CD14-positive monocyte (primary cell): ENCODE measurements at regions of chr4 and their contacts with region 1.

Region 1: DNA sequence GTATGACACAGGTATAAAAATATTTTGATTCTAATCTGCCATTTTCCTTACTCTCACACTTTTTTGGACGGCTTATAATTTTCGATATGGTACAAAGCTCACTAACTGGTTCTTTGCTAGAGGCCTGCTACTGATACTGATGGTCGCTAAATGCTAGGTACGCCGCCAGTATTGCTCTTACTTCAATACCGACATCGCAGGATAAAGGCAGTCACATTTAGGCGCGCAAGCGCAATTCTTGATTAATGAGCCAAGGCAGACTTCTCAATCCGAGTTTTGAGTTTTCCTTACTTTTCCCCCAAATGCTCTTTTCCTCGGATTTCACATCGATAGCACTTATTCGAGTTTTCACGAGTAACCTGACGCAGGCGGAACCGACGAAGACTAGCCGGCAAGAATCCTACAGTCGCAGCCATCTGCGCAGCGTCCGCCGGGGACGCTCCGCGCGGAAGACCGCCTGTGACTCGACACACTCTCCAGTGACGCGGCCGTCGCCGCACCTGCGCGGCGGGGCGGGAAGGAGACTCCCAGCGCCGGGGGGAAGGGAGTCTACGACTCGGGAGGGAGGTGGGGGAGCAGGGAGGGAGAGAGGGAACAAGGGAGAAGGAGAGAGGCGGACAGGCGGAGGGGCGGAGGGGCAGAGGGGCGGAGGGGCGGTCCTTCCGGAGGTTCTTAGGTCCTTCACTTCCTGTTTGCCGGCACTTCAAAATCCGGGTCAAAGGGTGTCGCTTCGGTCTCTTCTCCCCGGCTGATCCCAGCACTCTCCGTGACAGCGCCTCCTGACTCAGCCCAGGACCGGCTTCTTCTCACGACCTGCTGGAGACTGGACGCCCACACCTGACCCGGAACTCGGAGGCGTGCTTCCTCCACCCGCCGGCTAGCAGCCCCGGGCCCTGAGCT is at the start of gene USP38:
- DNase-seq: peak; percentile 93 to 98 (median 93)
- H3K4me3 ChIP-seq: peak within 1 kb of the TSS; percentile 75 to 89 (median 85)
- H3K4me3 Mint-ChIP-seq: peak within 1 kb of the TSS; percentile 98 to 99
- H3K27ac ChIP-seq: peak within 1 kb of the TSS; percentile 80 to 96
- H3K27ac Mint-ChIP-seq: peak within 1 kb of the TSS; percentile 93 to 99 (median 95)
- H3K4me1 ChIP-seq: peaks cover 37 to 54% of the 10 kb centered on the region in 2 donors
- H3K4me1 Mint-ChIP-seq: peaks cover 42% of the 10 kb centered on the region
- H3K27me3 ChIP-seq: no peaks in the 10 kb centered on the region
- H3K27me3 Mint-ChIP-seq: peaks cover 0 to 2% (median 0%) of the 10 kb centered on the region in 3 donors
- CTCF ChIP-seq: no peak
- polyA plus RNA-seq, gene USP38: 7.3 to 19.3 (median 12.4) TPM

Region 2: GRCh38 chr4:141220655-141221605 is 1963.5 kb before region 1 on chr4 and contains the start of gene ZNF330:
- intact Hi-C with region 1: loop called (anchors 5 to 10 kb)
- DNase-seq: peak; percentile 81 to 89 (median 85)
- H3K4me3 ChIP-seq: peak within 1 kb of the TSS; percentile 78 to 92 (median 87)
- H3K4me3 Mint-ChIP-seq: peak within 1 kb of the TSS; percentile 85 to 91
- H3K27ac ChIP-seq: peak within 1 kb of the TSS; percentile 94 to 99
- H3K27ac Mint-ChIP-seq: peak within 1 kb of the TSS; percentile 91 to 98 (median 96)
- H3K4me1 ChIP-seq: peaks cover 12 to 16% of the 10 kb centered on the region in 2 donors
- H3K4me1 Mint-ChIP-seq: peaks cover 29% of the 10 kb centered on the region
- H3K27me3 ChIP-seq: no peaks in the 10 kb centered on the region
- H3K27me3 Mint-ChIP-seq: peaks cover 0 to 3% (median 0%) of the 10 kb centered on the region in 3 donors
- CTCF ChIP-seq: no peak
- polyA plus RNA-seq, gene ZNF330: 21.6 to 38.9 (median 27.7) TPM

Region 3: DNA sequence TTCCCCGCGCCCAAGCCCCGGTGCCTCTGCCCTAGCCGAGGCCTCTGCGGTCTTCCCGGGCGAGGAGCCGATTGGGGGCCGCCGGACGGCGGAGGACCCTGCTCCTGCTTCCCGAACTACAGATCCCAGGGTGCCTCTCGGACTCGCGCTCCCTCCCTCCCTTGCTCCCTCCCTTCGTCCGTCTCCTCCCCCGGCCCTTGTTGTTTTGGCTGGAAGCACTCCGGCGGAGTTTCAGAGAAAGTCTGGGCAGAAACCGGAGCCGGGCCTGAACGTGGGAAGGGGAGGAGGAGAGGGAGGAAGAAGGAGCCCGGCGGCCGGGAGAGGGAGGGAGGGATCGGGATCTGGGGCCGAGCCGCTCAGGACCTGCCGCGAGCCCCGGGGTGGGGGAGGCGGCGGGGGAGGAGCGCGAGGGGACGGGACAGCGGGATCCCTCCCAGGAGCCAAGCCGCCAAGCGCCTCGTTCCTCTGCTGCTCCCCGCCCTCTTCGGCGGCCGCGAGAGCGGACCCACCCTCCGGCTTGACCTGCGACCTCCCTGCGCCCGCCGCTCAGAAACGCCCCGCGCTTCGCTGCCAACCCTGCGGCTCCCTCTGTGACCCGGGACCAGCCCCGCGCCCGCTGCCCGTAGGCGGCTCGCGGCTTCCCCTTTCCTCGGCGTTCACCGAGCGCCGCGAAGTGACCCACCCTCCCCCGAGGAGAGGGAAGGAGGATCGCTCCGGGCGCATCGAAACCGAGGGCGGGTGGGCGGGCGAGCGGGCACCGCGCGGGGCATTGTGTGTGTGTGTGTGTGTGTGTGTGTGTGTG is 151.7 kb after region 1 on chr4:
- intact Hi-C with region 1: loop called (anchors 5 to 10 kb)
- DNase-seq: peak; percentile 65 to 78 (median 73)
- H3K4me3 ChIP-seq: peak overlapping the region; percentile 65 to 98 (median 93)
- H3K4me3 Mint-ChIP-seq: peak overlapping the region; percentile 99 to 100
- H3K27ac ChIP-seq: peak overlapping the region; percentile 86 to 91
- H3K27ac Mint-ChIP-seq: peak overlapping the region; percentile 71 to 93 (median 89)
- H3K4me1 ChIP-seq: peaks cover 27 to 35% of the 10 kb centered on the region in 2 donors
- H3K4me1 Mint-ChIP-seq: peaks cover 37% of the 10 kb centered on the region
- H3K27me3 ChIP-seq: no peaks in the 10 kb centered on the region
- H3K27me3 Mint-ChIP-seq: peaks cover 0 to 3% (median 2%) of the 10 kb centered on the region in 3 donors
- CTCF ChIP-seq: no peak